ENCODE measurements at regions of chr3 and their contacts with region 1.

Region 1: DNA sequence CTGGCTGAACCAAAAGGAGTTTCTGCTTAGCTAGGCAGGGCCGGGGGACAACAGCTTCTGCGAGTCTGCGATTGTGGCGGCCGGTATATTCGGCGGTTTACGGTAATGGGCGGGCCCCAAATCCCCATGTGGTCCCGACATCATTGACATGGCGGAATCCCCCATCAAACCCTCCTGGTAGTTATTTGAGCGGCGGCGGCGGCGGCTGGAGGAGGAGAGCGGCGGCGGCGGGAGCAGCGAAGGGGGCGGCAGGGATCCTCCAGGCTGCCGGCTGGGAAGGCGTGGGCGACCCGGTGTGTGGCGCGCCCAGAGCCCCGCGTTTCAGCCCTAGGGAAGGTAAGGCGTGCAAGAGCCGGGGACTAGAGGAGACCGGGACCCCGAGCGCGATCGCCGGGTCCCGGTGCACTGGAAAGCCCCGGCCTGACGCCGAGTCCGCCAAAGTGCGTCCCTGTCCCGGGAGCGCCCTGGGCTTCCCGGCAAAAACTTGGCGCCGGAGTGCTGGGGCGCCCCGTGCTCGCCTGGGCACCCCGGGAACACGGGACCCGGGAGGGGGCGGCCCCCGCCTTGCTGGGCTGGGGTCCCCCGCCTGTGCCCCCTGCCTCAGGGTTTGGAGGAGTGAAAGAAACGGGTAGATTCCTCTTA is at the start of gene FNDC3B:
- DNase-seq: peak; percentile 76 to 92 (median 89)
- ATAC-seq: peak; percentile 96
- H3K4me3 ChIP-seq: peak within 1 kb of the TSS; percentile 64
- H3K4me3 Mint-ChIP-seq: peak within 1 kb of the TSS; percentile 96 to 100 (median 98)
- H3K27ac ChIP-seq: peak within 1 kb of the TSS; percentile 97
- H3K27ac Mint-ChIP-seq: peak within 1 kb of the TSS; percentile 94 to 99 (median 97)
- H3K4me1 ChIP-seq: peaks cover 11 to 15% of the 10 kb centered on the region in 2 donors
- H3K4me1 Mint-ChIP-seq: peaks cover 27 to 73% (median 55%) of the 10 kb centered on the region in 7 donors
- H3K27me3 ChIP-seq: no peaks in the 10 kb centered on the region
- H3K27me3 Mint-ChIP-seq: peaks cover 0 to 19% (median 0%) of the 10 kb centered on the region in 5 donors
- total RNA-seq, gene FNDC3B: 21.1 to 78.6 (median 29.4) TPM

Region 2: GRCh38 chr3:170869645-170870593 is 1169.6 kb before region 1 on chr3 and contains the start of gene RPL22L1:
- CTCF ChIA-PET with region 1: no interaction called
- POLR2A ChIA-PET with region 1: no interaction called
- intact Hi-C with region 1: loop called in 1 of 2 experiments (anchors 5 kb)
- DNase-seq: peak; percentile 83 to 92 (median 90)
- ATAC-seq: peak; percentile 96
- H3K4me3 ChIP-seq: peak within 1 kb of the TSS; percentile 84
- H3K4me3 Mint-ChIP-seq: peak within 1 kb of the TSS; percentile 93 to 98 (median 94)
- H3K27ac ChIP-seq: peak within 1 kb of the TSS; percentile 86
- H3K27ac Mint-ChIP-seq: peak within 1 kb of the TSS; percentile 96 to 99 (median 98)
- H3K4me1 ChIP-seq: peaks cover 22% of the 10 kb centered on the region in 2 donors
- H3K4me1 Mint-ChIP-seq: peaks cover 10 to 41% (median 26%) of the 10 kb centered on the region in 7 donors
- H3K27me3 ChIP-seq: no peaks in the 10 kb centered on the region
- H3K27me3 Mint-ChIP-seq: peaks cover 0 to 4% (median 0%) of the 10 kb centered on the region in 5 donors
- total RNA-seq, gene RPL22L1: 27.5 to 62.6 (median 47.9) TPM

Region 3: GRCh38 chr3:171736556-171736955 is 303.0 kb before region 1 on chr3:
- CTCF ChIA-PET with region 1: no interaction called
- POLR2A ChIA-PET with region 1: no interaction called
- intact Hi-C with region 1: no loop called
- DNase-seq: no peak
- ATAC-seq: no peak
- H3K4me3 ChIP-seq: no peak overlapping the region
- H3K4me3 Mint-ChIP-seq: no peak overlapping the region
- H3K27ac ChIP-seq: no peak overlapping the region
- H3K27ac Mint-ChIP-seq: no peak overlapping the region
- H3K4me1 ChIP-seq: no peaks in the 10 kb centered on the region
- H3K4me1 Mint-ChIP-seq: no peaks in the 10 kb centered on the region
- H3K27me3 ChIP-seq: no peaks in the 10 kb centered on the region
- H3K27me3 Mint-ChIP-seq: peaks cover 0 to 20% (median 0%) of the 10 kb centered on the region in 5 donors

Region 4: DNA sequence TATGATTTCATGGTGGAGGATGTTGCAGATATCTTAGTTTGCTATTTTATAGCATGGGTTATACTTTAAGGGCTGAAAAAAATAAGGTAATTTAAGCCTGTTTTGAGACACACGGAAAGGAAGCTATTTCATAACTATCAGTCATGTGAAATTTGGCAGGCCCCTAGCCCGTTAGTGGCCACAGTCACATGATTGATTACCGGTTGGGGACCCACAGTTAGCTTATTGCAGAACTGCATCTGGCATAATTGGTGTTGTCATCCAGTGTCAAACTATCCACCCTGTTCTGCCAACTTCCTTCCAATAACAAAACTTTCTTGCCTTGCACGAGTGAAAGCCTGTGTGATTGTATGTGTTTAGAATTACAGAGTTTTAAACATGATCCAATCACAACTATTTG is 35.0 kb after region 1 on chr3:
- CTCF ChIA-PET with region 1: no interaction called
- POLR2A ChIA-PET with region 1: no interaction called
- intact Hi-C with region 1: no loop called
- DNase-seq: no peak
- ATAC-seq: peak; percentile 74
- H3K4me3 ChIP-seq: no peak overlapping the region
- H3K4me3 Mint-ChIP-seq: no peak overlapping the region
- H3K27ac ChIP-seq: no peak overlapping the region
- H3K27ac Mint-ChIP-seq: no peak overlapping the region
- H3K4me1 ChIP-seq: no peaks in the 10 kb centered on the region
- H3K4me1 Mint-ChIP-seq: peaks cover 4 to 30% (median 21%) of the 10 kb centered on the region in 7 donors
- H3K27me3 ChIP-seq: no peaks in the 10 kb centered on the region
- H3K27me3 Mint-ChIP-seq: no peaks in the 10 kb centered on the region

Region 5: DNA sequence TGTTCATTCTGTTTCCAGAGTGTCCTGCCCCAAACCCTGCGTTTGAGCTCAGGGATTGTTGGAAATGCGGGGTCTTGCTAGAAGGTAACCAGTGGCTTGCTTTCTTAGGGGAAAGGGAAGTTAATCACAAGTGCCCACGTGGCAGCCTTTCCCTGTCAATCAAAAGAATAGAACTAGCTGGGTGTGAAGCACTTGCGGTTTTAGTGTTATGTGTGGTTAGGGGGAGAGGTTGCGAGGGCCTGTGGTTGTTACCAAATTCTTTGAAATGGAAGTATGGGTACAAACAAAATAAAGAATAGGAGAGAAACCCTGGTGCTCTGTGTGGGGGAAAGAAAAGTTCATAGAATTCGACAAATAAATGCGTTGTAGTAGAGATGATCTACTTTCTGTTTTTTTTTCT is 67.4 kb after region 1 on chr3:
- CTCF ChIA-PET with region 1: interaction called, 13 read pairs
- POLR2A ChIA-PET with region 1: interaction called, 6 read pairs
- intact Hi-C with region 1: loop called (anchors 1 kb)
- DNase-seq: peak in 8 of 9 donors; percentile 57 to 89 (median 84)
- ATAC-seq: peak; percentile 80
- H3K4me3 ChIP-seq: peak overlapping the region; percentile 45
- H3K4me3 Mint-ChIP-seq: peak overlapping the region; percentile 78 to 89 (median 84)
- H3K27ac ChIP-seq: peak overlapping the region; percentile 54
- H3K27ac Mint-ChIP-seq: peak overlapping the region; percentile 88 to 94 (median 91)
- H3K4me1 ChIP-seq: peaks cover 44 to 73% of the 10 kb centered on the region in 2 donors
- H3K4me1 Mint-ChIP-seq: peaks cover 65 to 91% (median 82%) of the 10 kb centered on the region in 7 donors
- H3K27me3 ChIP-seq: no peaks in the 10 kb centered on the region
- H3K27me3 Mint-ChIP-seq: peaks cover 0 to 8% (median 0%) of the 10 kb centered on the region in 5 donors

Region 6: GRCh38 chr3:172262991-172263608 is 223.5 kb after region 1 on chr3:
- CTCF ChIA-PET with region 1: no interaction called
- POLR2A ChIA-PET with region 1: no interaction called
- intact Hi-C with region 1: no loop called
- DNase-seq: no peak
- ATAC-seq: no peak
- H3K4me3 ChIP-seq: no peak overlapping the region
- H3K4me3 Mint-ChIP-seq: no peak overlapping the region
- H3K27ac ChIP-seq: no peak overlapping the region
- H3K27ac Mint-ChIP-seq: no peak overlapping the region
- H3K4me1 ChIP-seq: no peaks in the 10 kb centered on the region
- H3K4me1 Mint-ChIP-seq: peaks cover 0 to 6% (median 0%) of the 10 kb centered on the region in 7 donors
- H3K27me3 ChIP-seq: no peaks in the 10 kb centered on the region
- H3K27me3 Mint-ChIP-seq: no peaks in the 10 kb centered on the region

Region 7: DNA sequence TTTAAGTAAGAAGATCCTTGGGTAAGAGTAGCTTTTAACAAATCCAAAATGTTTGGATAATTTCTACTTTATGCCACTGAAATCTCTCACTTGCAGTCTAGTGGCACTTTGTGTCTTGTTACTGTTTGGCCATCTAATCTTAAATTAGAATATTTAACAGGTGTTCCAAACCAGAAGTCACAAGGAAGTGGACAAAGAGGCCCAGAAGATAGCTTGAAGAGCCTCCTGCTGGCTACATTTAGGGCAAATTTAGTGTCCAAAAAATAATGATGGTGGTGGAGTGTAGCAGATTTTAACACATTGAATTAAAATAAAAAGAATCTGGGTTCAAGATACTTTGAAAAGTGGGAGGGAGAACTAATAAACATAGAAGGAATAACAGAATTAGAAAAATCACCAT is 236.5 kb after region 1 on chr3:
- CTCF ChIA-PET with region 1: interaction called, 3 read pairs
- POLR2A ChIA-PET with region 1: no interaction called
- intact Hi-C with region 1: loop called in 1 of 2 experiments (anchors 1 kb)
- DNase-seq: no peak
- ATAC-seq: no peak
- H3K4me3 ChIP-seq: no peak overlapping the region
- H3K4me3 Mint-ChIP-seq: no peak overlapping the region
- H3K27ac ChIP-seq: no peak overlapping the region
- H3K27ac Mint-ChIP-seq: no peak overlapping the region
- H3K4me1 ChIP-seq: no peaks in the 10 kb centered on the region
- H3K4me1 Mint-ChIP-seq: peaks cover 0 to 8% (median 0%) of the 10 kb centered on the region in 7 donors
- H3K27me3 ChIP-seq: no peaks in the 10 kb centered on the region
- H3K27me3 Mint-ChIP-seq: no peaks in the 10 kb centered on the region

Region 8: DNA sequence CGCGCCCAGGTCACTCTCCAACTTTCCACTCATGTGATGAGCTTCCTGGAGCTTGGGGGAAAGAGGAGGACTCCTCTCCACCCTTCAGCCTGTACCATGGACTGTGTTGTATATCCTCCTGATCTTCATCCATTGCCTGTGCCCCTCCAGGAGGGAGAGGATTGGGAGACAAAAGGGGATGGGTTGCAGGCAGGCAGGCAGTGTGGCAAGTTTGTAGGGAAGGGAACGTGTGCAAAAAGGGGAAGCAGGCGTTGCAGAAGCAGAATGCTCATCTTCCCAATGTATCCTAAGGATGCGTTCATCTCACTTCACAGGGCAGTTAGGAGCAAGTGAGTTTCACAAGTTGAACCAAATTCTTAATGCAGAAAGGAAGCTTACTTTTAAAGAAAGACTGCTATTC is 436.8 kb after region 1 on chr3:
- CTCF ChIA-PET with region 1: no interaction called
- POLR2A ChIA-PET with region 1: no interaction called
- intact Hi-C with region 1: loop called in 1 of 2 experiments (anchors 10 kb)
- DNase-seq: no peak
- ATAC-seq: no peak
- H3K4me3 ChIP-seq: peak overlapping the region; percentile 61
- H3K4me3 Mint-ChIP-seq: peak overlapping the region; percentile 27 to 95 (median 90)
- H3K27ac ChIP-seq: no peak overlapping the region
- H3K27ac Mint-ChIP-seq: no peak overlapping the region
- H3K4me1 ChIP-seq: no peaks in the 10 kb centered on the region
- H3K4me1 Mint-ChIP-seq: peaks cover 5 to 18% (median 12%) of the 10 kb centered on the region in 7 donors
- H3K27me3 ChIP-seq: no peaks in the 10 kb centered on the region
- H3K27me3 Mint-ChIP-seq: peaks cover 0 to 10% (median 4%) of the 10 kb centered on the region in 5 donors

Region 9: GRCh38 chr3:172750368-172751174 is 711.0 kb after region 1 on chr3 and contains the start of gene ECT2:
- CTCF ChIA-PET with region 1: no interaction called
- POLR2A ChIA-PET with region 1: no interaction called
- intact Hi-C with region 1: loop called (anchors 1 kb)
- DNase-seq: peak; percentile 87 to 98 (median 94)
- ATAC-seq: peak; percentile 98
- H3K4me3 ChIP-seq: peak within 1 kb of the TSS; percentile 88
- H3K4me3 Mint-ChIP-seq: peak within 1 kb of the TSS; percentile 88 to 100 (median 96)
- H3K27ac ChIP-seq: peak within 1 kb of the TSS; percentile 63
- H3K27ac Mint-ChIP-seq: peak within 1 kb of the TSS; percentile 52 to 98 (median 85)
- H3K4me1 ChIP-seq: peaks cover 5% of the 10 kb centered on the region in 2 donors
- H3K4me1 Mint-ChIP-seq: peaks cover 6 to 45% (median 15%) of the 10 kb centered on the region in 7 donors
- H3K27me3 ChIP-seq: no peaks in the 10 kb centered on the region
- H3K27me3 Mint-ChIP-seq: peaks cover 0 to 8% (median 0%) of the 10 kb centered on the region in 5 donors
- total RNA-seq, gene ECT2: 1.3 to 41.2 (median 2.1) TPM